Activated naive CD4-positive, alpha-beta T cell treated with anti-CD3 and anti-CD28 coated beads, Interleukin-2, amount 10 ng/mL, durations not matched to agents 7 days and 5 days (primary cell): ENCODE measurements at regions of chr19 and their contacts with region 1.

Region 1: DNA sequence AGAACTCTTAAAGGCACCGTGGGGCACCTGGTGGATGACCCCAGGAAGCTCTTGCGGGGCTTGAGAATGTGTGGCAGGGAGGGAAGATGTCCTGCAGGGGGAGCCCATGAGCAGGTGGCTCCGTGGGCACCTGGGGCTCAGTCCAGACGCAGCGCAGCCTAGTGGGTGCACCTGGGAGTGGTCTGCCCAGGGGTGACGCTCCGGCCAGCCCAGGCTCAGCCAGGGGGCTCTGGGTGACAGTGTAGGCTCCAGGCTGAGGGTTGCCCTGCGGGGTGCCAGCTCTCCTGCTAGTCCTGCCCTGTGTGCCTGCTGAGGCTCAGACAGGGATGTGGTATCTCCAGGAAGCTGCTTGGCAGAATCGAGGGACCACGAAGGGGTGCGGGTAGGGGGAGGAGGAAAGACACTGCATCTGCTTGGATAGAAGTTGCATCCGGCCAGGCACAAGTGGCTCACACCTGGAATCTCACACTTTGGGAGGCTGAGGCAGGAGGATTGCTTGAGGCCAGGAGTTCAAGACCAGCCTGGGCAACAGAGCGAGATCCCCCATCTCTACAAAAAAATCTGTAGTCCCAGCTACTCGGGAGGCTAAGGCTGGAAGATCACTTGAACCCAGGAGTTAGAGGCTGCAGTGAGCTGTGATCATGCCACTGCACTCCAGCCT is 15.0 kb upstream of the PGLS start:
- DNase-seq: peak; percentile 89
- H3K4me3 Mint-ChIP-seq: no peak overlapping the region
- H3K27ac Mint-ChIP-seq: no peak overlapping the region
- H3K4me1 Mint-ChIP-seq: peaks cover 29% of the 10 kb centered on the region
- H3K27me3 Mint-ChIP-seq: no peaks in the 10 kb centered on the region

Region 2: GRCh38 chr19:17470068-17470841 is 26.2 kb before region 1 on chr19 and contains the start of gene SLC27A1:
- CTCF ChIA-PET with region 1: interaction called, 19 read pairs
- DNase-seq: peak; percentile 94
- H3K4me3 Mint-ChIP-seq: peak within 1 kb of the TSS; percentile 82
- H3K27ac Mint-ChIP-seq: peak within 1 kb of the TSS; percentile 72
- H3K4me1 Mint-ChIP-seq: peaks cover 46% of the 10 kb centered on the region
- H3K27me3 Mint-ChIP-seq: peaks cover 58% of the 10 kb centered on the region

Region 3: GRCh38 chr19:17479325-17479791 is 17.1 kb before region 1 on chr19:
- CTCF ChIA-PET with region 1: interaction called, 15 read pairs
- DNase-seq: no peak
- H3K4me3 Mint-ChIP-seq: no peak overlapping the region
- H3K27ac Mint-ChIP-seq: no peak overlapping the region
- H3K4me1 Mint-ChIP-seq: no peaks in the 10 kb centered on the region
- H3K27me3 Mint-ChIP-seq: peaks cover 6% of the 10 kb centered on the region

Region 4: GRCh38 chr19:17511724-17512573 is 15.5 kb after region 1 on chr19:
- CTCF ChIA-PET with region 1: interaction called, 58 read pairs
- DNase-seq: peak; percentile 90
- H3K4me3 Mint-ChIP-seq: peak overlapping the region; percentile 97
- H3K27ac Mint-ChIP-seq: peak overlapping the region; percentile 95
- H3K4me1 Mint-ChIP-seq: peaks cover 41% of the 10 kb centered on the region
- H3K27me3 Mint-ChIP-seq: no peaks in the 10 kb centered on the region

Region 5: GRCh38 chr19:17560205-17560595 is 63.7 kb after region 1 on chr19:
- CTCF ChIA-PET with region 1: interaction called, 13 read pairs
- DNase-seq: no peak
- H3K4me3 Mint-ChIP-seq: no peak overlapping the region
- H3K27ac Mint-ChIP-seq: no peak overlapping the region
- H3K4me1 Mint-ChIP-seq: peaks cover 20% of the 10 kb centered on the region
- H3K27me3 Mint-ChIP-seq: no peaks in the 10 kb centered on the region

Region 6: GRCh38 chr19:17576759-17577473 is 80.4 kb after region 1 on chr19:
- CTCF ChIA-PET with region 1: interaction called, 48 read pairs
- DNase-seq: peak; percentile 30
- H3K4me3 Mint-ChIP-seq: no peak overlapping the region
- H3K27ac Mint-ChIP-seq: no peak overlapping the region
- H3K4me1 Mint-ChIP-seq: peaks cover 7% of the 10 kb centered on the region
- H3K27me3 Mint-ChIP-seq: no peaks in the 10 kb centered on the region

Region 7: GRCh38 chr19:17615889-17616685 is 119.6 kb after region 1 on chr19:
- CTCF ChIA-PET with region 1: no interaction called
- DNase-seq: no peak
- H3K4me3 Mint-ChIP-seq: no peak overlapping the region
- H3K27ac Mint-ChIP-seq: no peak overlapping the region
- H3K4me1 Mint-ChIP-seq: no peaks in the 10 kb centered on the region
- H3K27me3 Mint-ChIP-seq: peaks cover 59% of the 10 kb centered on the region